WTC11 (cell line): ENCODE measurements at regions of chr9 and their contacts with region 1.

Region 1: GRCh38 chr9:121498150-121498486 is 1.5 kb downstream of the GGTA1 start:
- DNase-seq: peak; percentile 61
- ATAC-seq: peak; percentile 67
- H3K4me3 Mint-ChIP-seq: peak overlapping the region; percentile 79
- H3K27ac Mint-ChIP-seq: no peak overlapping the region
- H3K4me1 Mint-ChIP-seq: peaks cover 28% of the 10 kb centered on the region
- H3K27me3 Mint-ChIP-seq: peaks cover 76% of the 10 kb centered on the region
- CTCF ChIP-seq: peak; percentile 63

Region 2: DNA sequence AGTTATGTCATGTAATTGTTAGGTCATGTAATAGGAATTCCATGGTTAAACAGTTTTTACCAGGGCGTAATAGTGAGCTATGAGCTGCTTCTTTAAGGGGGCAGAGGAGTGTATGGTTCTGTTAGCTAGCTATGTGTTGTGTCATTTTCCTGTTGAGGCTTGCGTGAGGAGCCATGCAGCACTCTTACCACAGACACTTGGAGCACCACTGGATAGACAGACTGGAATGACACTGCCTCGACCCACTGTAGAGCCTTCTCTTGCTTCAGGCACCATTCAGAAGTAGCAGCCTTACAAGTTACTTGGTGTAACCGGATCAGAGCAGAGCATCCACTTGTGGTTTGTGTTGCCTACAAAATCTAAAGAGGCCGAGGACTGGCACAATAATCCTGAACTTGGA is 99.7 kb before region 1 on chr9:
- CTCF ChIA-PET with region 1: no interaction called
- POLR2A ChIA-PET with region 1: no interaction called
- DNase-seq: no peak
- ATAC-seq: no peak
- H3K4me3 Mint-ChIP-seq: no peak overlapping the region
- H3K27ac Mint-ChIP-seq: no peak overlapping the region
- H3K4me1 Mint-ChIP-seq: peaks cover 10% of the 10 kb centered on the region
- H3K27me3 Mint-ChIP-seq: no peaks in the 10 kb centered on the region
- CTCF ChIP-seq: no peak

Region 3: GRCh38 chr9:121424024-121424432 is 74.1 kb before region 1 on chr9:
- CTCF ChIA-PET with region 1: no interaction called
- POLR2A ChIA-PET with region 1: no interaction called
- DNase-seq: no peak
- ATAC-seq: no peak
- H3K4me3 Mint-ChIP-seq: no peak overlapping the region
- H3K27ac Mint-ChIP-seq: no peak overlapping the region
- H3K4me1 Mint-ChIP-seq: peaks cover 3% of the 10 kb centered on the region
- H3K27me3 Mint-ChIP-seq: peaks cover 3% of the 10 kb centered on the region
- CTCF ChIP-seq: no peak

Region 4: GRCh38 chr9:121463026-121463807 is 34.9 kb before region 1 on chr9:
- CTCF ChIA-PET with region 1: interaction called, 11 read pairs
- POLR2A ChIA-PET with region 1: no interaction called
- DNase-seq: peak; percentile 82
- ATAC-seq: peak; percentile 87
- H3K4me3 Mint-ChIP-seq: no peak overlapping the region
- H3K27ac Mint-ChIP-seq: no peak overlapping the region
- H3K4me1 Mint-ChIP-seq: peaks cover 10% of the 10 kb centered on the region
- H3K27me3 Mint-ChIP-seq: no peaks in the 10 kb centered on the region; the same call in 1 of the 2 replicates
- CTCF ChIP-seq: peak; percentile 67

Region 5: GRCh38 chr9:121483049-121483448 is 15.1 kb before region 1 on chr9:
- CTCF ChIA-PET with region 1: interaction called, 11 read pairs
- POLR2A ChIA-PET with region 1: no interaction called
- DNase-seq: no peak
- ATAC-seq: no peak
- H3K4me3 Mint-ChIP-seq: no peak overlapping the region
- H3K27ac Mint-ChIP-seq: no peak overlapping the region
- H3K4me1 Mint-ChIP-seq: peaks cover 2% of the 10 kb centered on the region; the same call in 1 of the 2 replicates
- H3K27me3 Mint-ChIP-seq: no peaks in the 10 kb centered on the region
- CTCF ChIP-seq: no peak

Region 6: DNA sequence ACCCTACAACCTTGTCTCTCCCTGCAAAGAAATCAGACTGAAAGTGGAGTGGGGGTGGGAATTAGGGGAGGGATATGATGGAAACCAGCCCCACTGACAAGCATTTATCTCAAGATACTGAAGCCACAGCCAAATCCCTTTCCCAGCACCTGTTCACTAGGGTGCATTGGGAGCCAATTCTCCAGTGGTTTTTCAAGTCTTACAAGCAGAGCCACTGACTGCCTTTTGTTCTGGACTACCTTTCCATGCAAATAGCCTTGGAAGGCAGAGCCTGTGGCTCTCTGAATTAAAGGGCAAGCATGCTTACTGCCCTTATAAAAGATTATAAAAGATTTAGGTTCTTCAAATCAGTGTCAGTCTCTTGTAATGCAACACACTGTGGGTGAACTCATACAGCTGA is 10.3 kb after region 1 on chr9:
- CTCF ChIA-PET with region 1: interaction called, 10 read pairs
- POLR2A ChIA-PET with region 1: no interaction called
- DNase-seq: no peak
- ATAC-seq: peak; percentile 40
- H3K4me3 Mint-ChIP-seq: no peak overlapping the region
- H3K27ac Mint-ChIP-seq: no peak overlapping the region
- H3K4me1 Mint-ChIP-seq: peaks cover 32% of the 10 kb centered on the region
- H3K27me3 Mint-ChIP-seq: peaks cover 17% of the 10 kb centered on the region; the same call in 1 of the 2 replicates
- CTCF ChIP-seq: no peak

Region 7: DNA sequence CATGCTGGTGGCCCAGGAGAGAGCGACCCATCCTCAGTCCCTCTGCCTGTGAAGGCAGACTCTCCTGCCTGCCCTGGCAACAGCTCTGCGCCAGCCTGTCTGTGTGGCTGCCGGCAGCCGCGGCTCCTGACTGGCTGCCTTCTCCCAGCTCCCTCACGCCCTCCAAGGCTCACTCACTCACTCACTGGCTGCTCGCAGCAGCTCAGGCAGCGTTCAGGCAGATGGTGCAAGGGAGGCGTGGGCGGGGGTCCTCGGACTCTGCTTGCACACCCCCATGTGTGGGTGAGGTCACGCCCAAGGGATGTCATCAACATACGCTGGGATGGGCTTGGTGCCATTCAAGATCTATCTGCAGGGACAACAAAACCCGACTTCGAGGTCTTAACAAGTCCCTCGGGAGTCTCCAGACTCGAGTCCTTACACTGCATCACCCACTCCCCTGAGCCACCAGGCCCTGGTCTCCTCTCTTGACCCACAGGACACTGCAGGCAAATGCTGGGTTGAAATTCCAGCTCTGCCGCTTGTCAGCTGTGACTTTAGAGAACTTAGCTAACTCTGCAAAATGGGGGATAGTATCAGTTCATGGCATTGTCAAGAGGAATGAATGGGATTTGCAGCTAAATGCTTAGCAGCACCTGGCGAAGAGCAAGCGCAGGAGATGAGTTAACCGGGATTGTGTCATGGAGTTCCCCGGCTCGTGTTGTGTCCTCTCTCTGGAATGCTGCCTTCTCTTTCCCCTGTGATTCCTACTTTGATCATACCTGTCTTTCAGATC is 220.2 kb after region 1 on chr9:
- CTCF ChIA-PET with region 1: no interaction called
- POLR2A ChIA-PET with region 1: no interaction called
- DNase-seq: no peak
- ATAC-seq: peak; percentile 52
- H3K4me3 Mint-ChIP-seq: no peak overlapping the region
- H3K27ac Mint-ChIP-seq: peak overlapping the region; percentile 45; the same call in 1 of the 2 replicates
- H3K4me1 Mint-ChIP-seq: peaks cover 53% of the 10 kb centered on the region
- H3K27me3 Mint-ChIP-seq: no peaks in the 10 kb centered on the region
- CTCF ChIP-seq: no peak